Ascending aorta (tissue), 2 donors: ENCODE measurements at regions of chr12 and their contacts with region 1.

Region 1: DNA sequence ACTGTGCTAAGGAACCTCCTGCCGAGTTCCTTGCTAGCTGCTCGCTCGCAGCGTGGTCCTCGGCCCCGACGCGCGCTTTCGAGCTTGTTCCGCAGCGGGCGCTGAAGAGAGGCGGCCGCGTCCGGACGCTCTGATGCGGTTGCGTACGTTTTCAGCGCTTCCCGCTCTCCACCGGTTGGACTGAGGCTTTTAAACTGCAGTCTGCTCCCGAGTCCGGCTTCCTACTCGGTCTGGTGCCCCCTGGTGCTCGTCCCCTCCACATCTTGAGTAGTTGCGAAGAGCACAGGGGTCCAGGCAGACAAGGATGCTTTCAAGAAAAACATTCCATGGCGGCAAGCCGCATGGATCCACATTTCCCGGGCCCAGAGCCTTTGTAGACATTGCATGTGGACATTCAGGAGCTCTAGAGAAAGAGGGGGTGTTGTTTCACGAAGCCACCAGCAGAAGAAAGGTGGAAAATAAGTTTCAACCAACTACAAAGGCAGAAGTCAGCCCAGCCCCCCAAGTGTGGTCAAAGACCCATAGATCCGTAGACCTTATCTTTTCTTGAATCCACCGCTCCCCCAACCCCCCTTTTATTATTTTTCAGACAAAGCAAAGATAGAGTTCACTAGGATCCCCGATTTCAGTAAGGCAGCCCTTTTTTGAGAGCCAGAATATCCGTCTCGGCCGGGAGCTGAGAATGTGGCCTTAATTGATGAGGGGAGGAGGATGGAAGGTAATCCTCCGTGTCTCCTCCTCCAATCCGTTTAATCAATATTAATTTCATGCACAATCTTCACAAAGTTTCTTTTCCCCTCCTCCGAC is 984 bp upstream of the WNK1 start:
- DNase-seq: peak; percentile 64 to 96
- H3K4me3 ChIP-seq: peak overlapping the region; percentile 83 to 90
- H3K27ac ChIP-seq: peak overlapping the region; percentile 98 to 99
- H3K4me1 ChIP-seq: peaks cover 0 to 9% of the 10 kb centered on the region in 2 donors
- H3K27me3 ChIP-seq: no peaks in the 10 kb centered on the region
- CTCF ChIP-seq: peak; percentile 68 to 75 (median 69)

Region 2: DNA sequence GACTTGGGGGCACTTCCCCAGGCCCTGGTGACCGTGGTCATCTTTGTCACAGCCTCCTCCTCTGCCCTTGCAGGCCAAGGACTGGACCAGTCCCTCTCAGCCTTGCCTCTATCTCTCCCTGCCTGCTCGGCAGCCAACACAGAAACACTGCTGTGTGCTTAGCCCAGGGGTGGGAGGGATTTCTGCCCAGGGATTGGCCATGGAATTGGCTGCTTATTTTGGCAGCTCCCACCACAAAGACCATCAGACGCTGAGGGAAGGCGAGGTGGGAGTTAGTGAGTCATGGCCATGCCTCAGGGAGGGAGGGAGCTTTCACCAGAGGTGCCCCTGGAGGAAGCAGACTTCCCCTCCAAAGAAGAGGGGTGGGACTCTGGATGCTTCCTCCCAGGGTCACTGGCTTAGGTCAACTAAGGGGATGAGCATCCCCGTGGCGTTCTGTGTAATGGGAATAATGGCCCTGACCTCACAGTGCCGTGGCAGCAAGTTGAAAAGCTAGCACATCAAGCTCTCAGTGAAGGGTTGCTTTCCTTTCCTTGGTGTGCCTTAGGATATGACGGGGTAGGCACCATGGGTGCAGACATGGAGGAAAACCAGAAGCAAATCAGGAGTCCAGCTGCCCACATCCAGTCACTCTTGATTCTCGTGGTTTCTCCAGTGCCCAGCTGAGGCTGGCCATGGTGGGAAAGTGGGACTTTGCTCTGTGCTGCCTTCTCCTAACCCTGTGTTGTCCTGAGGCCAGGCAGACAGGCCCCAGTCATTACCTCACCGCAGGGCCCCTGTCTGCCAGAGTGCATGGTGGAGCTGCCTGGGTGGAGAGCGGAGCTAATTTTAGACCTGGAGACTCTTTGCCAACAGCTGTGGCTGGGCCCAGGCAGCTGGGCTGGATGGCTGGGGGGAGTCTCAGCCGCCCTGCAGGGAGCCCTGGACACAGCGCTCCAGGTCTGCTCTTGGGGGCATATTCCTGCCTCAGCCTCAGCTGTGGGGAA is 270.3 kb before region 1 on chr12:
- intact Hi-C with region 1: loop called (anchors 10 kb)
- DNase-seq: peak; percentile 73 to 95
- H3K4me3 ChIP-seq: peak overlapping the region in 1 of 2 donors; percentile 30
- H3K27ac ChIP-seq: peak overlapping the region; percentile 94 to 98
- H3K4me1 ChIP-seq: peaks cover 3 to 26% of the 10 kb centered on the region in 2 donors
- H3K27me3 ChIP-seq: no peaks in the 10 kb centered on the region
- CTCF ChIP-seq: peak in 1 of 3 experiments; percentile 5

Region 3: DNA sequence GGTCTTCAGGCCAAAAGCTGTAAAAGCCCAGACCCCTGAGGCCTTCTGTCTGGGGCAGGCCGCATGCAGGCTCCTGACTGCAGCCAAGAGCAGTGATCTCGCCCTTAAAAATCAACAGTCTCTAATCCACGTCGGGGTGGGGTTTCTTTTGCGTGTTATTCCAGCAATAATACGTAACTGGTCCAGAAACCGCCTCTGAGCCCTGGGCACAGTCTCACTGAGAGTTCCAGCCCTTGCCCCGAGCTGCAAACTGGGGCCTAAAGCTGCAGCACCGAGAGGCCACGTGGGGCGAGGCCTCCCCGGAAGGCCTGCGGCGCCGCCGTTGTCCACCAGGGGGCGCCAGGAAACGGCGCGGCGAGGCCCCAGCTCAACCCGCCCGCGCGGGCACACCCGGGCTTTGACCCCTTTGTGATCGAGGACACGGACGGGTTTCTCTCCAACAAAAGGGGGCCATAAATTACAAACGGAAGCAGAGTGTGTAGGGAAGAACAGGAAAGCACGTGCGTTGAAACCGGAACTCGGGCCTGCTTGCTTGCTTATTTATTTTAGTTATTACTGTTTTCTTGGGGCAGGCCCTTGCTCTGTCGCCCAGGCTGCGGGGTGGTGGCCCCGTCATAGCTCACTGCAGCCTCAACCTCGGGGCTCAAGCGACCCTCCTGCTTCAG is 175.3 kb before region 1 on chr12:
- intact Hi-C with region 1: loop called (anchors 1 kb)
- DNase-seq: peak; percentile 42 to 88
- H3K4me3 ChIP-seq: peak overlapping the region in 1 of 2 donors; percentile 31
- H3K27ac ChIP-seq: peak overlapping the region; percentile 70 to 81
- H3K4me1 ChIP-seq: peaks cover 15 to 29% of the 10 kb centered on the region in 2 donors
- H3K27me3 ChIP-seq: no peaks in the 10 kb centered on the region
- CTCF ChIP-seq: peak; percentile 99 to 100 (median 100)

Region 4: GRCh38 chr12:642633-643474 is 108.5 kb before region 1 on chr12:
- intact Hi-C with region 1: loop called (anchors 2 kb)
- DNase-seq: peak in 1 of 2 donors; percentile 79
- H3K4me3 ChIP-seq: peak overlapping the region; percentile 72 to 81
- H3K27ac ChIP-seq: peak overlapping the region; percentile 97 to 99
- H3K4me1 ChIP-seq: peaks cover 18 to 36% of the 10 kb centered on the region in 2 donors
- H3K27me3 ChIP-seq: no peaks in the 10 kb centered on the region
- CTCF ChIP-seq: peak; percentile 37 to 48 (median 39)

Region 5: GRCh38 chr12:795305-795704 is 43.9 kb after region 1 on chr12:
- intact Hi-C with region 1: no loop called
- DNase-seq: no peak
- H3K4me3 ChIP-seq: no peak overlapping the region
- H3K27ac ChIP-seq: no peak overlapping the region
- H3K4me1 ChIP-seq: peaks cover 0 to 9% of the 10 kb centered on the region in 2 donors
- H3K27me3 ChIP-seq: no peaks in the 10 kb centered on the region
- CTCF ChIP-seq: no peak

Region 6: GRCh38 chr12:949453-950191 is 198.2 kb after region 1 on chr12 and contains the start of gene RAD52:
- intact Hi-C with region 1: loop called (anchors 1 kb)
- DNase-seq: peak; percentile 88 to 98
- H3K4me3 ChIP-seq: peak within 1 kb of the TSS; percentile 82 to 93
- H3K27ac ChIP-seq: peak within 1 kb of the TSS; percentile 92 to 94
- H3K4me1 ChIP-seq: peaks cover 5 to 6% of the 10 kb centered on the region in 2 donors
- H3K27me3 ChIP-seq: no peaks in the 10 kb centered on the region
- CTCF ChIP-seq: peak; percentile 97 to 98 (median 98)
- total RNA-seq, gene RAD52: 175 TPM

Region 7: DNA sequence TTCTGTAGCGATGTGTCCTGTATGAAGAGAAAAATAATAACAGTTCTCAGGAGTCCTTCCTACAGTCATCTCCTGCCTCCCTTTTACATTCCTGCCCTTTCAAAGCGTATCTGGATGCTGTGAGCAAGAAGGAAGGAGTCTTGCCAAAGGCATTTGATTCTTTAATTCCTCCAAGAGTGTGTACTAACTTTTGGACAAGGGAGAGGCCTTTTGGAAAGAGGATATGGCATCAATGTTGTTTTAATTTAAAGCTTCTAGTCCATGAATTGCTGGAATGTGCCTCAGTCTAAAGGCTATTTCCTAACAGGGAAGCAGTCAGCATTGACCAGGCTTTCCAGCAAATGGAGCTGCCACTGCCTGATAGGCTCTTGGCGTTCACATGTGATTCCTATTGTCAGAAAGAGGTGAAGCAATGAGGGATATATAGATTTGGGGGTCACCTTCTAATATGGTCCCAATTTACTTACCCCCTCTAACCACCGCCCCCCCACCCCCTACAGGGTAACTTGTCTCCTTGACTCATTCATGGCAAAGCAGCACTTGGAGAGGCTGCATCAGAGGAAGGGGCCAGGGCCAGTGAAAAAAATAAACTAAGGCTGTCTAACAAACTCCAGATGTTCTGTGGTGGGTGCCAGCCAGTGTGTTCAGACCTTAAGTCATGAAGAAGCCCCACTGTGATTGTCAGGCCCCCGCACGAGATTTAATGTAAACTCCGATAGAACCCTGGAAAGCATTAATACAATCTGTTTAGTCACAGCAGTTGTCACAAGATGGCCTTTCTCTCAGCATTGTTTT is 622.7 kb after region 1 on chr12:
- intact Hi-C with region 1: no loop called
- DNase-seq: no peak
- H3K4me3 ChIP-seq: no peak overlapping the region
- H3K27ac ChIP-seq: no peak overlapping the region
- H3K4me1 ChIP-seq: no peaks in the 10 kb centered on the region
- H3K27me3 ChIP-seq: no peaks in the 10 kb centered on the region
- CTCF ChIP-seq: no peak

Region 8: GRCh38 chr12:1594261-1595025 is 843.0 kb after region 1 on chr12 and contains the start of gene FBXL14:
- intact Hi-C with region 1: loop called (anchors 10 kb)
- DNase-seq: peak; percentile 45 to 92
- H3K4me3 ChIP-seq: peak within 1 kb of the TSS; percentile 92 to 95
- H3K27ac ChIP-seq: peak within 1 kb of the TSS; percentile 84 to 86
- H3K4me1 ChIP-seq: peaks cover 9 to 26% of the 10 kb centered on the region in 2 donors
- H3K27me3 ChIP-seq: no peaks in the 10 kb centered on the region
- CTCF ChIP-seq: peak in 1 of 3 experiments; percentile 40
- total RNA-seq, gene FBXL14: 14.7 TPM